Naive thymus-derived CD4-positive, alpha-beta T cell (primary cell): ENCODE measurements at regions of chr4 and their contacts with region 1.

Region 1: GRCh38 chr4:80125252-80126177 is 52.5 kb upstream of the ANTXR2 start:
- DNase-seq: peak in 8 of 9 donors; percentile 7 to 75 (median 64)
- ATAC-seq: peak; percentile 88
- H3K4me3 ChIP-seq: peak overlapping the region; percentile 0
- H3K4me3 Mint-ChIP-seq: peak overlapping the region; percentile 1 to 68 (median 52)
- H3K27ac ChIP-seq: peak overlapping the region; percentile 84
- H3K27ac Mint-ChIP-seq: peak overlapping the region; percentile 83 to 95 (median 89)
- H3K4me1 ChIP-seq: peaks cover 34 to 42% of the 10 kb centered on the region in 2 donors
- H3K4me1 Mint-ChIP-seq: peaks cover 25 to 57% (median 54%) of the 10 kb centered on the region in 7 donors
- H3K27me3 ChIP-seq: no peaks in the 10 kb centered on the region
- H3K27me3 Mint-ChIP-seq: peaks cover 0 to 2% (median 0%) of the 10 kb centered on the region in 5 donors

Region 2: DNA sequence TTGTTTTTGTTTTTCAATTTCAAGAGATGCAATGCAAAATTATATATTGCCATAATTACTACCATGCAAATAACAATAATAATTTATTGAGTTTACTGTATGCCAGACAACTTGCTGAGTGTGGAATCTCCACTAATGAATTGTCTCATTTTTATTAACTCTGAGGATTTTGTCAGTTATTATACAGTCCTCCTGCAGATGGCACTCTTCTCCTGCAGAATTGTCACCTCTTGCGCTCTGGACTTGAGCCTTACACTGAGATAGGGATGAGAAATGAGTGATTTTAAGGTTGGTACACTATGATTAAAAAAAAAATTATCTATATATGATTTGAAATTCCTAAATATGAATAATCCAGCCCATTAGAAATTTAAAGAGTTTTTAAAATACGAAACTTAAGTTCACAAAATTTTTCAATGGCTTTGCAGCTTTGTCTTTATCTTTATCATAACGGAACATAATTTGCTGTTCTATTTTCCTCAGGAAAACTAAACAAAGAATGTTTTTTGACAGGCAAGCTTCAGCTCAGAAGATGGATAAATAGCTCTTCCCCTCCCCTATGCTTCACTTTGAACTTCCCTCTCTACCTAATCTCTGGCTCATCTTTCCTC is 1173.5 kb before region 1 on chr4:
- CTCF ChIA-PET with region 1: no interaction called
- POLR2A ChIA-PET with region 1: no interaction called
- intact Hi-C with region 1: loop called in 1 of 2 experiments (anchors 5 kb)
- DNase-seq: peak in 6 of 9 donors; percentile 19 to 43 (median 38)
- ATAC-seq: peak; percentile 85
- H3K4me3 ChIP-seq: no peak overlapping the region
- H3K4me3 Mint-ChIP-seq: no peak overlapping the region
- H3K27ac ChIP-seq: no peak overlapping the region
- H3K27ac Mint-ChIP-seq: no peak overlapping the region
- H3K4me1 ChIP-seq: no peaks in the 10 kb centered on the region
- H3K4me1 Mint-ChIP-seq: no peaks in the 10 kb centered on the region
- H3K27me3 ChIP-seq: no peaks in the 10 kb centered on the region
- H3K27me3 Mint-ChIP-seq: peaks cover 0 to 36% (median 22%) of the 10 kb centered on the region in 5 donors

Region 3: GRCh38 chr4:80007745-80008149 is 117.8 kb before region 1 on chr4:
- CTCF ChIA-PET with region 1: no interaction called
- POLR2A ChIA-PET with region 1: no interaction called
- intact Hi-C with region 1: loop called in 1 of 2 experiments (anchors 5 kb)
- DNase-seq: no peak
- ATAC-seq: no peak
- H3K4me3 ChIP-seq: no peak overlapping the region
- H3K4me3 Mint-ChIP-seq: peak overlapping the region in 1 of 10 donors; percentile 43
- H3K27ac ChIP-seq: no peak overlapping the region
- H3K27ac Mint-ChIP-seq: peak overlapping the region in 3 of 9 donors; percentile 5 to 86 (median 56)
- H3K4me1 ChIP-seq: peaks cover 12 to 22% of the 10 kb centered on the region in 2 donors
- H3K4me1 Mint-ChIP-seq: peaks cover 19 to 59% (median 44%) of the 10 kb centered on the region in 7 donors
- H3K27me3 ChIP-seq: no peaks in the 10 kb centered on the region
- H3K27me3 Mint-ChIP-seq: no peaks in the 10 kb centered on the region

Region 4: GRCh38 chr4:80072744-80073472 is 52.6 kb before region 1 on chr4 and contains the start of gene ANTXR2:
- CTCF ChIA-PET with region 1: interaction called, 9 read pairs
- POLR2A ChIA-PET with region 1: interaction called, 4 read pairs
- intact Hi-C with region 1: loop called (anchors 1 kb)
- DNase-seq: peak; percentile 49 to 75 (median 56)
- ATAC-seq: peak; percentile 85
- H3K4me3 ChIP-seq: peak within 1 kb of the TSS; percentile 76
- H3K4me3 Mint-ChIP-seq: peak within 1 kb of the TSS; percentile 82 to 99 (median 96)
- H3K27ac ChIP-seq: peak within 1 kb of the TSS; percentile 86
- H3K27ac Mint-ChIP-seq: peak within 1 kb of the TSS; percentile 88 to 98 (median 96)
- H3K4me1 ChIP-seq: peaks cover 23 to 29% of the 10 kb centered on the region in 2 donors
- H3K4me1 Mint-ChIP-seq: peaks cover 25 to 76% (median 62%) of the 10 kb centered on the region in 7 donors
- H3K27me3 ChIP-seq: no peaks in the 10 kb centered on the region
- H3K27me3 Mint-ChIP-seq: peaks cover 0 to 3% (median 0%) of the 10 kb centered on the region in 5 donors
- total RNA-seq, gene ANTXR2: 20.3 to 69.8 (median 50.0) TPM

Region 5: GRCh38 chr4:80153874-80154544 is 28.5 kb after region 1 on chr4:
- CTCF ChIA-PET with region 1: interaction called, 19 read pairs
- POLR2A ChIA-PET with region 1: interaction called, 4 read pairs
- intact Hi-C with region 1: loop called in 1 of 2 experiments (anchors 2 kb)
- DNase-seq: no peak
- ATAC-seq: no peak
- H3K4me3 ChIP-seq: no peak overlapping the region
- H3K4me3 Mint-ChIP-seq: peak overlapping the region in 1 of 10 donors; percentile 6
- H3K27ac ChIP-seq: no peak overlapping the region
- H3K27ac Mint-ChIP-seq: peak overlapping the region in 2 of 9 donors; percentile 30 to 63
- H3K4me1 ChIP-seq: no peaks in the 10 kb centered on the region
- H3K4me1 Mint-ChIP-seq: peaks cover 0 to 14% (median 10%) of the 10 kb centered on the region in 7 donors
- H3K27me3 ChIP-seq: no peaks in the 10 kb centered on the region
- H3K27me3 Mint-ChIP-seq: peaks cover 0 to 6% (median 0%) of the 10 kb centered on the region in 5 donors

Region 6: DNA sequence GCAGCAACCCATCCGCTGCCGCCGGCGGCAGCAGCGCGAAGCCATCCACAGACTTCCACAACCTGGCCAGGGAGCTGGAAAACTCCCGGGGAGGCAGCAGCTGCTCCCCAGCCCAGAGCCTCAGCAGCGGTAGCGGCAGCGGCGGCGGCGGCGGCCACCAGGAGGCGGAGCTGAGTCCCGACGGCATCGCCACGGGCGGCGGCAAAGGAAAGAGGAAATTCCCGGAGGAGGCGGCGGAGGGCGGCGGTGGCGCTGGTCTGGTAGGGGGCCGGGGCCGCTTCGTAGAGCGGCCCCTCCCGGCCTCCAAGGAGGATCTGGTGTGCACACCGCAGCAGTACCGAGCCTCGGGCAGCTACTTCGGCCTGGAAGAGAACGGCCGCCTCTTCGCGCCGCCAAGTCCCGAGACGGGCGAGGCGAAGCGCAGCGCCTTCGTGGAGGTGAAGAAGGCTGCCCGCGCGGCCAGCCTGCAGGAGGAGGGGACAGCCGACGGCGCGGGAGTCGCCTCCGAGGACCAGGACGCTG is 76.7 kb after region 1 on chr4:
- CTCF ChIA-PET with region 1: interaction called, 29 read pairs
- POLR2A ChIA-PET with region 1: interaction called, 15 read pairs
- intact Hi-C with region 1: loop called (anchors 1 kb)
- DNase-seq: peak; percentile 55 to 86 (median 70)
- ATAC-seq: peak; percentile 78
- H3K4me3 ChIP-seq: peak overlapping the region; percentile 63
- H3K4me3 Mint-ChIP-seq: peak overlapping the region; percentile 79 to 91 (median 84)
- H3K27ac ChIP-seq: peak overlapping the region; percentile 75
- H3K27ac Mint-ChIP-seq: peak overlapping the region in 8 of 9 donors; percentile 2 to 86 (median 76)
- H3K4me1 ChIP-seq: peaks cover 5 to 8% of the 10 kb centered on the region in 2 donors
- H3K4me1 Mint-ChIP-seq: peaks cover 18 to 30% (median 27%) of the 10 kb centered on the region in 7 donors
- H3K27me3 ChIP-seq: no peaks in the 10 kb centered on the region
- H3K27me3 Mint-ChIP-seq: peaks cover 12 to 53% (median 12%) of the 10 kb centered on the region in 5 donors

Region 7: GRCh38 chr4:80335554-80336358 is 210.2 kb after region 1 on chr4 and contains the start of gene CFAP299:
- CTCF ChIA-PET with region 1: no interaction called
- POLR2A ChIA-PET with region 1: no interaction called
- intact Hi-C with region 1: no loop called
- DNase-seq: peak in 8 of 9 donors; percentile 32 to 57 (median 42)
- ATAC-seq: peak; percentile 87
- H3K4me3 ChIP-seq: peak within 1 kb of the TSS; percentile 62
- H3K4me3 Mint-ChIP-seq: peak within 1 kb of the TSS; percentile 85 to 94 (median 88)
- H3K27ac ChIP-seq: no peak within 1 kb of the TSS
- H3K27ac Mint-ChIP-seq: peak within 1 kb of the TSS in 5 of 9 donors; percentile 19 to 85 (median 49)
- H3K4me1 ChIP-seq: peaks cover 0 to 11% of the 10 kb centered on the region in 2 donors
- H3K4me1 Mint-ChIP-seq: peaks cover 0 to 15% (median 9%) of the 10 kb centered on the region in 7 donors
- H3K27me3 ChIP-seq: peaks cover 0 to 5% of the 10 kb centered on the region in 2 donors
- H3K27me3 Mint-ChIP-seq: peaks cover 0 to 34% (median 20%) of the 10 kb centered on the region in 5 donors
- total RNA-seq, gene CFAP299: not detected

Region 8: GRCh38 chr4:80500613-80501012 is 375.1 kb after region 1 on chr4:
- CTCF ChIA-PET with region 1: no interaction called
- POLR2A ChIA-PET with region 1: no interaction called
- intact Hi-C with region 1: loop called in 1 of 2 experiments (anchors 5 kb)
- DNase-seq: peak in 7 of 9 donors; percentile 24 to 81 (median 71)
- ATAC-seq: peak; percentile 96
- H3K4me3 ChIP-seq: peak overlapping the region; percentile 1
- H3K4me3 Mint-ChIP-seq: peak overlapping the region in 8 of 10 donors; percentile 1 to 67 (median 54)
- H3K27ac ChIP-seq: no peak overlapping the region
- H3K27ac Mint-ChIP-seq: peak overlapping the region in 8 of 9 donors; percentile 60 to 88 (median 81)
- H3K4me1 ChIP-seq: peaks cover 23 to 42% of the 10 kb centered on the region in 2 donors
- H3K4me1 Mint-ChIP-seq: peaks cover 9 to 81% (median 71%) of the 10 kb centered on the region in 7 donors
- H3K27me3 ChIP-seq: no peaks in the 10 kb centered on the region
- H3K27me3 Mint-ChIP-seq: peaks cover 0 to 3% (median 0%) of the 10 kb centered on the region in 5 donors